ENCODE measurements at regions of chr3 and their contacts with region 1.

Region 1: DNA sequence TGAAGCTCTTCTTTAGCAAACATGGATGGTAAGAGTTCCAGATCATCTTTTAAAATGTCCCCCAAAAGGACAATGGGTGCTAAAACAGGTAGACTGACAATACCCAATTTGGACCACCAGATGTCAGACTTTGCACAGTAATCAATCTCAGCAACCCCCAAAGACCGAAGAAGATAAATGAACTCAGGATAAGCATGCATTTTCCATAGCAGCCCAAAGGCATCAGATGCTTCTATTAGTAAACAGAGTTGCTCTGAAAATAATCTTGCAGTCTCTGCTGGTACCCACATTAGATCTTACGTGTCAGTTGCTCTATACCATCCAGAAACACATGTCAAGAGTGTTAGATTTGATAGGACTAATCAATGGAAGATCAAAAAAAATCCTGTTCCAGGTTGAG is 20.6 kb downstream of the MYH15 start:
- DNase-seq: peak in 7 of 9 experiments; percentile 7 to 80 (median 37)
- ATAC-seq: peak; percentile 93
- H3K4me3 ChIP-seq: no peak overlapping the region
- H3K4me3 Mint-ChIP-seq: no peak overlapping the region
- H3K27ac ChIP-seq: no peak overlapping the region
- H3K27ac Mint-ChIP-seq: no peak overlapping the region
- H3K4me1 ChIP-seq: no peaks in the 10 kb centered on the region
- H3K4me1 Mint-ChIP-seq: peaks cover 3% of the 10 kb centered on the region
- H3K27me3 ChIP-seq: peaks cover 0 to 2% of the 10 kb centered on the region in 2 experiments
- H3K27me3 Mint-ChIP-seq: peaks cover 3% of the 10 kb centered on the region
- CTCF ChIP-seq: peak; percentile 85

Region 2: DNA sequence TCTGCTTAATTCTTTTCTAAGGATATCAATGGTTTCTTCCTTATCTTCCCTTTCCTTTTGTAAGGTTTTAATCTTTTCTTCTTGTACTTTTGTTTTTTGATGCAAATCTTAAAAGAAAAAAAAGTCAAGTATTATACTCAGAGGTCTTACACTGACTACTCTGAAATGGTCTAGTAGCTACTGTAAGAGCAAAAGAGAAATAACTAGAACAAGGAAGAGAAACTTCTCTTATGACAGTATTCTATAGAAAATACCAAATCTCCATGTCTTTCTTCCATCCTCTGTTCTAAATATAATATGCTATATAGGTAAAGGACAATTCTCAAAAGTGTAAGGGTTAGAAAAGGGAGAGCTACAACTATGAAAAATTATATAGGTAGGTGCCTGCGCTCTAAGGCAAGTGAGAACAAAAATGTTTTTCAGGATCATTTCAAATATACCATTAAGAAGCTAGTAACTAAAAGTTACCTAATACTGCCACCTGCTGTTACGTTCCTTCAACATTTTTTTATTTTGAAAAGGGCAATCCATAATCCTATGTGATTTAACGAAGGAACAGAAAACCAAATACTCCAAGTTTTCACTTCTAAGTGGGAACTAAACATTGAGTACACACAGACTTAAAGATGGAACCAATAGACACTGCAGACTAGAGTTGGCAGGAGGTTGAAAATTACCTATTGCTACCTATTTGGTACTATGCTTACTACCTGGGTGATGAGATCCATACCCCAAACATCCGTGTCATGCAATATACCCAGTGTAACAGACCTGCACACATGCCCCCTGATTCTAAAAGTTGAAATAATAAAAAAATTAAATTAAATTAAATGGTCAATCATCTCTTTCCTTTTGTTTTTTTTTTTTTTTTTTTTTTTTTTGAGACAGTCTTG is 62.7 kb after region 1 on chr3:
- CTCF ChIA-PET with region 1: interaction called, 52 read pairs
- POLR2A ChIA-PET with region 1: no interaction called
- intact Hi-C with region 1: loop called (anchors 1 kb)
- DNase-seq: peak in 2 of 9 experiments; percentile 59 to 65
- ATAC-seq: peak; percentile 52
- H3K4me3 ChIP-seq: no peak overlapping the region
- H3K4me3 Mint-ChIP-seq: no peak overlapping the region
- H3K27ac ChIP-seq: no peak overlapping the region
- H3K27ac Mint-ChIP-seq: no peak overlapping the region
- H3K4me1 ChIP-seq: no peaks in the 10 kb centered on the region
- H3K4me1 Mint-ChIP-seq: peaks cover 2% of the 10 kb centered on the region
- H3K27me3 ChIP-seq: no peaks in the 10 kb centered on the region
- H3K27me3 Mint-ChIP-seq: no peaks in the 10 kb centered on the region
- CTCF ChIP-seq: peak; percentile 58

Region 3: DNA sequence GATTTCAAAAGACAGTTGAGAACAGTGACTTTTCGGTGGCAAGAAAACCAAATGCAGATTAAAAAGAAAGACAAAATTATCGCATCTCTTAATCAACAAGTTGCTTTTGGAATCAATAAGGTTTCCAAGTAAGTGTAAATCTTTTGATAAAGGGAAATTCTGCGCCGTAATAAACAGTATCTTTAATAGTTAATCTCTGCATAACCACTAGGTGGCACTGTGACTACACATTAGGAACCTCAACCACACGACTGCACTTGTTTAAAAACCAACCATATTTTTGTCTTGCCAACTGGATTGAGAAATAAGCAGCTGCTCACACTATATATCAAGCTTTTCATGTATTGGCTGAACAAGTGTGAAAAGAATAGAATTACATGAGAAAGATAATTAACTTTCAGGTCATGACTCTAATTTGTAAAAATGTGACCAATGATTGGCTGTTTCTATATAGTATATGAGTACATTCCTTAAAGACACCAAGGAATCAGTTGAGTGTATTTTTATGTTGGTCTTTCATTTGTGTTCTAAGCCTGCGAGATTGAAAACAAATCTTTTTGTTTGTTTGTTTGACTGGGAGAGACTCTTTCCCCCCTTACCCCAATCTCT is 172.5 kb after region 1 on chr3:
- CTCF ChIA-PET with region 1: interaction called, 6 read pairs
- POLR2A ChIA-PET with region 1: no interaction called
- intact Hi-C with region 1: loop called (anchors 1 to 5 kb)
- DNase-seq: peak in 7 of 9 experiments; percentile 12 to 85 (median 33)
- ATAC-seq: peak; percentile 84
- H3K4me3 ChIP-seq: no peak overlapping the region
- H3K4me3 Mint-ChIP-seq: no peak overlapping the region
- H3K27ac ChIP-seq: no peak overlapping the region
- H3K27ac Mint-ChIP-seq: no peak overlapping the region
- H3K4me1 ChIP-seq: no peaks in the 10 kb centered on the region
- H3K4me1 Mint-ChIP-seq: peaks cover 10% of the 10 kb centered on the region
- H3K27me3 ChIP-seq: no peaks in the 10 kb centered on the region
- H3K27me3 Mint-ChIP-seq: no peaks in the 10 kb centered on the region
- CTCF ChIP-seq: peak; percentile 83

Region 4: GRCh38 chr3:109081746-109082510 is 592.2 kb after region 1 on chr3:
- CTCF ChIA-PET with region 1: no interaction called
- POLR2A ChIA-PET with region 1: no interaction called
- intact Hi-C with region 1: loop called (anchors 1 to 5 kb)
- DNase-seq: peak in 2 of 9 experiments; percentile 40 to 52
- ATAC-seq: no peak
- H3K4me3 ChIP-seq: no peak overlapping the region
- H3K4me3 Mint-ChIP-seq: no peak overlapping the region
- H3K27ac ChIP-seq: no peak overlapping the region
- H3K27ac Mint-ChIP-seq: no peak overlapping the region
- H3K4me1 ChIP-seq: no peaks in the 10 kb centered on the region
- H3K4me1 Mint-ChIP-seq: no peaks in the 10 kb centered on the region
- H3K27me3 ChIP-seq: no peaks in the 10 kb centered on the region
- H3K27me3 Mint-ChIP-seq: peaks cover 15% of the 10 kb centered on the region
- CTCF ChIP-seq: peak; percentile 39

Region 5: GRCh38 chr3:109819734-109820133 is 1330.0 kb after region 1 on chr3:
- CTCF ChIA-PET with region 1: no interaction called
- POLR2A ChIA-PET with region 1: no interaction called
- intact Hi-C with region 1: loop called in 1 of 2 experiments (anchors 10 kb)
- DNase-seq: no peak
- ATAC-seq: no peak
- H3K4me3 ChIP-seq: no peak overlapping the region
- H3K4me3 Mint-ChIP-seq: no peak overlapping the region
- H3K27ac ChIP-seq: no peak overlapping the region
- H3K27ac Mint-ChIP-seq: no peak overlapping the region
- H3K4me1 ChIP-seq: no peaks in the 10 kb centered on the region
- H3K4me1 Mint-ChIP-seq: peaks cover 2% of the 10 kb centered on the region
- H3K27me3 ChIP-seq: no peaks in the 10 kb centered on the region
- H3K27me3 Mint-ChIP-seq: no peaks in the 10 kb centered on the region
- CTCF ChIP-seq: no peak